ENCODE measurements at regions of chr3 and their contacts with region 1.

Region 1: GRCh38 chr3:178325330-178325729 is 210.9 kb upstream of the KCNMB2 start:
- DNase-seq: no peak
- ATAC-seq: no peak

Region 2: GRCh38 chr3:177041021-177041729 is 1284.2 kb before region 1 on chr3:
- intact Hi-C with region 1: loop called (anchors 10 kb)
- DNase-seq: no peak
- ATAC-seq: peak; percentile 93

Region 3: GRCh38 chr3:177724020-177724638 is 601.2 kb before region 1 on chr3:
- intact Hi-C with region 1: loop called (anchors 10 kb)
- DNase-seq: peak; percentile 82
- ATAC-seq: peak; percentile 96

Region 4: DNA sequence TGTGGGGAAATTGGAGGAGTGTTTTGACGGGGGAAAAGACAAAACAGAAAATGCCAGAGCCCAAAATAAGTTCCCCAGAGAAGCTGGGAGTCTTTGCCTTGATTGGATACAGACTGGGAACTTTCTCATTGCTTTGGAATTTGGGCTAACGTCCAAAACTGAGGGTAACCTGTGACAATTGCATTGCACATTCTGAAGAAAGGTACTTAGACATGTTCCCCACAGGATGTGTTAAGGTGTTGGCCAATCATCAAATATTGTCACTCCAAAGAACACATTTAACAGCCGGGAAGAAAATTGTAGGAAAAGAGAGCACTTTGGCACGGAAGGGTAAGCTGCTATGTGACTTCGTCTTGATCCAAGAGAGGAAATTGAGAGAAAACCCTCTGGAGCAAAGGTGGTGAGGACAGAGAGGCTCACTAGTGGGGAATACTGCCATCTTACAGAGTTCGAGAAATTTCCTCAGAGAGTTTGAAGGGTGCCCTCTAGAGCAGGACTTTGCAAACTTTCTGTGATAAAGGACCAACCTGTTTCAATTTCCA is 508.6 kb before region 1 on chr3:
- intact Hi-C with region 1: loop called (anchors 10 kb)
- DNase-seq: no peak
- ATAC-seq: peak; percentile 60

Region 5: GRCh38 chr3:178084938-178085816 is 240.2 kb before region 1 on chr3:
- intact Hi-C with region 1: loop called (anchors 5 kb)
- DNase-seq: peak; percentile 90
- ATAC-seq: peak; percentile 96

Region 6: GRCh38 chr3:178367817-178368617 is 42.7 kb after region 1 on chr3:
- intact Hi-C with region 1: loop called (anchors 5 kb)
- DNase-seq: no peak
- ATAC-seq: peak; percentile 90

Region 7: DNA sequence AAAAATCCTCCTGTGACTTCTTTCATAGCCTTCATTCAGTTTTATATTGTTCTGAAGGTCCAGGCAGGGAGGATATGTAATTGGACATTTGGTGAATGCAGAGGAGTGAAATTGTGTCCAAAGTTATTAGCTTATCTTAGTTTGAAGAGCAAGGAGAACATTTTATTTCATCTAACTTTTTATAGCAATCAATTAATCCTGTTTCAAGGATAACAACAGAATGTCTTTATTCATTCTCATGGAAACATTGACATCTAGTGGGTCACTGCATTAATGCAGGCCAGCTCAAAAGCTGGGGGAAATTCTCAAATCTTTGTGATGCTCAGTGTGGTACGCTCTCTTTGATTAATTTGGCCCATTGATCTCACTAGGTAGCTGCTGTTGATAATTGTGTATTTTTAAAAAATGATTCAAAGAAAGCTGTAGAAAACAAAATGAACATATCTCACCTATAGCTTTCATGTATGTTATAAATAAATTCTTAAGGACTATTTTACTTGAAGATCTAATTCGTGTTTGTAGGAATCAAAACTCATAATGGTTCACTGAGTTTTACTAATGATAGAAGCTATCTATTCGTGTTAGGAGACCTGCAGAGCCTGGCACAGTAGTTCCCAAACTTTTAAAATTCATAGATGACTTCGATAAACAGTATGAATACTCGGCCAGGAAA is 60.1 kb after region 1 on chr3:
- intact Hi-C with region 1: loop called (anchors 5 kb)
- DNase-seq: no peak
- ATAC-seq: peak; percentile 86

Measured in Right ventricle myocardium inferior (tissue), 1 donor.